T-cell (primary cell): ENCODE measurements at regions of chr3 and their contacts with region 1.

Region 1: DNA sequence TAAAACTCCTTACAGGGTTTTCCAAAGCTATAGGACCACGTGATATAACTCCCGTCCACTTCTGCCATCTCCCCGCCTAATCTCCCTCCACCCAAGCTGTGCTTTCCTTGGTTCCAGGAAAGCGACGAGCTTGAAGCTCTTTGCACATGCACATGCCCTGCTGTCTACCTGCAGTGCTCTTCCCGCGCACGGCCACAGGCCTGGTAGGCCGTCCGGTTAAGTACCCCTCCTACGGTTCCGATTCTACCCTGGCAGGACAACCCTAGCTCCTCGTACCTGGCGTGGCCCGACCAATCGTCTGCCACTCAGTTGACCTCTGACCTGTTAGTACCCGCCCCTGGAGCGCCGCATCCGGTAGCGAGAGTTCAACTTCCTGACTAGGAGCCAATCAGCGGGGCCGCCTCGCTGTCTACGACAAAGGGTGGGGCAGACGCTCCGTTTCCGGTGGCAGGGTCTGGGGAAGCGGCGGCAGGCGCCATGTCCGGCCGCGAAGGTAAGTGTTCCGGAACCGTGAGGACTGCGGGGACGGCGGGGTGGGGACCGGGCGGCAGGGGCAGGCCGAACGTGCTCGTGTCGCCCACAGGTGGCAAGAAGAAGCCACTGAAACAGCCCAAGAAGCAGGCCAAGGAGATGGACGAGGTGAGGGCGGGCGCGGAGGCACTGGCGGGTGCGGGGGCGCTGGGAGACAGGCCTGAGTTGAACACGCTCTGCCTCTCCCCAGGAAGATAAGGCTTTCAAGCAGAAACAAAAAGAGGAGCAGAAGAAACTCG is at the starts of genes CCDC51 and TMA7:
- DNase-seq: peak; percentile 92 to 99 (median 97)
- ATAC-seq: peak; percentile 94 to 97 (median 95)
- H3K4me3 ChIP-seq: peak within 1 kb of the TSS; percentile 80 to 90
- H3K4me3 Mint-ChIP-seq: peak within 1 kb of the TSS; percentile 81 to 96 (median 89)
- H3K27ac ChIP-seq: peak within 1 kb of the TSS; percentile 93
- H3K27ac Mint-ChIP-seq: peak within 1 kb of the TSS; percentile 98 to 99
- H3K4me1 ChIP-seq: peaks cover 12 to 49% of the 10 kb centered on the region in 2 experiments
- H3K4me1 Mint-ChIP-seq: peaks cover 28 to 40% (median 37%) of the 10 kb centered on the region in 3 donors
- H3K27me3 ChIP-seq: no peaks in the 10 kb centered on the region
- H3K27me3 Mint-ChIP-seq: no peaks in the 10 kb centered on the region
- total RNA-seq, gene CCDC51: 5.0 to 7.9 (median 6.4) TPM
- total RNA-seq, gene TMA7: 216 to 245 (median 229) TPM

Region 2: GRCh38 chr3:47984097-47984728 is 455.8 kb before region 1 on chr3:
- CTCF ChIA-PET with region 1: no interaction called
- POLR2A ChIA-PET with region 1: no interaction called
- DNase-seq: no peak
- ATAC-seq: no peak
- H3K4me3 ChIP-seq: no peak overlapping the region
- H3K4me3 Mint-ChIP-seq: no peak overlapping the region
- H3K27ac ChIP-seq: no peak overlapping the region
- H3K27ac Mint-ChIP-seq: no peak overlapping the region
- H3K4me1 ChIP-seq: no peaks in the 10 kb centered on the region
- H3K4me1 Mint-ChIP-seq: peaks cover 0 to 2% (median 0%) of the 10 kb centered on the region in 3 donors
- H3K27me3 ChIP-seq: no peaks in the 10 kb centered on the region
- H3K27me3 Mint-ChIP-seq: no peaks in the 10 kb centered on the region

Region 3: GRCh38 chr3:48268381-48269183 is 171.4 kb before region 1 on chr3:
- CTCF ChIA-PET with region 1: interaction called, 6 to 38 read pairs
- POLR2A ChIA-PET with region 1: interaction called, 3 to 4 read pairs
- DNase-seq: peak; percentile 45 to 88 (median 75)
- ATAC-seq: peak; percentile 96 to 98 (median 96)
- H3K4me3 ChIP-seq: peak overlapping the region in 1 of 2 donors; percentile 27
- H3K4me3 Mint-ChIP-seq: peak overlapping the region; percentile 72 to 87 (median 76)
- H3K27ac ChIP-seq: peak overlapping the region; percentile 80
- H3K27ac Mint-ChIP-seq: peak overlapping the region; percentile 93 to 94
- H3K4me1 ChIP-seq: peaks cover 20 to 25% of the 10 kb centered on the region in 2 experiments
- H3K4me1 Mint-ChIP-seq: peaks cover 32 to 39% (median 33%) of the 10 kb centered on the region in 3 donors
- H3K27me3 ChIP-seq: no peaks in the 10 kb centered on the region
- H3K27me3 Mint-ChIP-seq: no peaks in the 10 kb centered on the region

Region 4: DNA sequence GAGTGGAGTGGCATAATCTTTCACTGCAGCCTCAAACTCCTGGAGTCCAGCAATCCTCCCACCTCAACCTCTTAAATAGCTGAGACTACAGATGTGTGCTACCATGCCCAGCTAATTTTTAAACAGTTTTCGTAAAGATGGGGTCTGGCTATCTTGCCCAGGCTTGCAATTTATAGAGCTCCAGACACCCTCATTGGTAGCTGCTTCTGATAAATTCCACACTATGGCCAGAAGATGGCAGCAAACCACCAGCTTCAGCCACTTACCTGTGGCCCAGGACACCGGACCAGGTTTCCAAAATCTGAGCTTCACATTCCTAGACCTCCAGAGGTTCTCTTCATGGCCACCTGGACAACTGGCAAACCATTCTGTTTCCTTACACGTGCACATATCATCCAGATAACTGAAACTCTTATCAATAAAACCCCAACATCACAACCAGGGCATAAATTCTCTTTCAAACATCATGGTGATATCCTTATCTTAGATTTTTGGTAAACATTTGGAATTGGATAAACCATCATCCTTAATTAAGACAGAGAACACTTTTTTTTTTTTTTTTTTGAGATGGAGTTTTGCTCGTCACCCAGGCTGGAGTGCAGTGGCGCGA is 39.1 kb before region 1 on chr3:
- CTCF ChIA-PET with region 1: interaction called, 22 to 113 read pairs
- POLR2A ChIA-PET with region 1: no interaction called
- DNase-seq: peak; percentile 35 to 89 (median 56)
- ATAC-seq: peak; percentile 75 to 84 (median 82)
- H3K4me3 ChIP-seq: no peak overlapping the region
- H3K4me3 Mint-ChIP-seq: no peak overlapping the region
- H3K27ac ChIP-seq: no peak overlapping the region
- H3K27ac Mint-ChIP-seq: no peak overlapping the region
- H3K4me1 ChIP-seq: no peaks in the 10 kb centered on the region
- H3K4me1 Mint-ChIP-seq: no peaks in the 10 kb centered on the region
- H3K27me3 ChIP-seq: peaks cover 0 to 15% of the 10 kb centered on the region in 2 experiments
- H3K27me3 Mint-ChIP-seq: peaks cover 3 to 5% of the 10 kb centered on the region in 2 donors

Region 5: DNA sequence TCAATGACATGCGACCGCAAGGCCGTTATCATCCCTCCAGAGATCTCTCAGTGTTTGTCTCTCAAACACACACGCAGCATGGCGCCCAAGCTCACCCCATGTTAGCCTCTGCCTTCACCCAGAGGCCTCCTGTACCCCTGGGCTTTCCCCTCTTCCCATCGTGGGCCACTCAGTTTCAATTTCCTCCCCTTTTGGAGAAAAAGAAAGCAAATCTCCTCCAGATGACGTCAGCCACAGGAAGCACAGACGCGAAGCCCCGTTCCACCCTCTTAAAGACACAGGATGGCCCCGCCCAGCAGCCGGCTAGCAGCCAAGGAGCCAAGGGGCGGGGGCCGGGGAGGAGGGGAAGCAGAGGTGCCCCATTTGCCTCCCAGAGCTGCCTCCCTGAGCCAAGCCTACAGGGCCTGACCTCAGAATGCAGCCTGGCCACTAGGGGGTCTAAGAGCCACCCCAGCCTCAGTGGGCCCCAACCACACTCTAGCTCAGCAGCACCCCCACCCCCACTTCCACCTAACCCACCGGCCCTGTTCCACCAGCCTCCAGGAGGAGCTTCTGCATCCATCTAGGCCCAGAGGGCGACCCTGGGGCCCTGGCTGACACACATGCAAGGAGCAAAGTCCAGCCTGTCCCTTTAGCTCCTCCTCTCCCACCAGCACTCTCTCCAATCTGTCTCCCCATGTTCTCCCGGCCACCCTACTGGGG is 33.1 kb after region 1 on chr3:
- CTCF ChIA-PET with region 1: interaction called, 6 to 32 read pairs
- POLR2A ChIA-PET with region 1: interaction called in 1 of 2 experiments, 10 read pairs
- DNase-seq: peak; percentile 84 to 99 (median 95)
- ATAC-seq: peak; percentile 89 to 91 (median 91)
- H3K4me3 ChIP-seq: peak overlapping the region; percentile 60 to 77
- H3K4me3 Mint-ChIP-seq: peak overlapping the region; percentile 83 to 95 (median 95)
- H3K27ac ChIP-seq: peak overlapping the region; percentile 99
- H3K27ac Mint-ChIP-seq: peak overlapping the region; percentile 99
- H3K4me1 ChIP-seq: peaks cover 17 to 92% of the 10 kb centered on the region in 2 experiments
- H3K4me1 Mint-ChIP-seq: peaks cover 56 to 74% (median 72%) of the 10 kb centered on the region in 3 donors
- H3K27me3 ChIP-seq: no peaks in the 10 kb centered on the region
- H3K27me3 Mint-ChIP-seq: no peaks in the 10 kb centered on the region

Region 6: DNA sequence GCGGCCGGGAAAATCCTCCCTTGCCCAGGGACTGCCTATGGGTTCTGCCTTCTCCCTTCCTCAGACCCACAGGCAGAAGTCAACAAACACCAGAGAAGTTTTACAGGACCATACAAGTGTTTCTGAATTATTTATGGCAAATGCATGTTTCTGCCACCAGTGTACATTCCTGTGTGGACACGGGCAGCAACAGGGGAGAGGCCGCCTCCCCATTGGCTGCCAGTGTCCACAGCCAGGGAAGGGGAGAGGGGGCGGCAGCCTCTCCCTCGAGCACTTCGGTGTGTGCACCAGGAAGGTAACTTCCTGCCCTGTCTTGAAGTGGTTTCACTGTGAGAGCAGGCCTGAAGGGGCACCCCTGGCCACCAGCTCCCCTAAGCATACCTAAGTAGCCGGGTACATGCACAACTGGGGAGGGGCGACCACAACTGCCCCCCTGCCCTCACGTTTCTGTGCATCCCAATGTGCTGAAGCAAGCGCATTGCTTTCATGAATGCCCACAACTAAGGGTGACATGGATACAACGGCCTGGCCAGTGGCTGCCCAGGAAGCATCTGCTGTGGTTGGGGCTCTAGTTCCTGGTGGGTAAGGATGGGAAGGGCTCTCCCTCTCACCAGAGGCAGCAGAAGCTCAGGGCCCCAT is 78.8 kb after region 1 on chr3:
- CTCF ChIA-PET with region 1: no interaction called
- POLR2A ChIA-PET with region 1: no interaction called
- DNase-seq: peak in 4 of 35 experiments; percentile 8 to 33 (median 20)
- ATAC-seq: peak; percentile 47 to 62 (median 57)
- H3K4me3 ChIP-seq: no peak overlapping the region
- H3K4me3 Mint-ChIP-seq: peak overlapping the region in 1 of 3 donors; percentile 66
- H3K27ac ChIP-seq: peak overlapping the region; percentile 12
- H3K27ac Mint-ChIP-seq: peak overlapping the region; percentile 76 to 81
- H3K4me1 ChIP-seq: peaks cover 55 to 67% of the 10 kb centered on the region in 2 experiments
- H3K4me1 Mint-ChIP-seq: peaks cover 62 to 67% (median 65%) of the 10 kb centered on the region in 3 donors
- H3K27me3 ChIP-seq: no peaks in the 10 kb centered on the region
- H3K27me3 Mint-ChIP-seq: no peaks in the 10 kb centered on the region

Region 7: GRCh38 chr3:48548729-48549705 is 109.0 kb after region 1 on chr3:
- CTCF ChIA-PET with region 1: interaction called, 3 to 12 read pairs
- POLR2A ChIA-PET with region 1: no interaction called
- DNase-seq: peak; percentile 46 to 87 (median 78)
- ATAC-seq: peak; percentile 89 to 99 (median 96)
- H3K4me3 ChIP-seq: no peak overlapping the region
- H3K4me3 Mint-ChIP-seq: no peak overlapping the region
- H3K27ac ChIP-seq: no peak overlapping the region
- H3K27ac Mint-ChIP-seq: no peak overlapping the region
- H3K4me1 ChIP-seq: peaks cover 0 to 7% of the 10 kb centered on the region in 2 experiments
- H3K4me1 Mint-ChIP-seq: peaks cover 9 to 27% (median 19%) of the 10 kb centered on the region in 3 donors
- H3K27me3 ChIP-seq: no peaks in the 10 kb centered on the region
- H3K27me3 Mint-ChIP-seq: no peaks in the 10 kb centered on the region